ENCODE measurements at regions of chr5 and their contacts with region 1.

Region 1: GRCh38 chr5:39424736-39425637 is at the start of gene DAB2:
- DNase-seq: peak; percentile 72 to 77 (median 73)
- H3K4me3 ChIP-seq: peak within 1 kb of the TSS; percentile 49 to 79 (median 65)
- H3K4me3 Mint-ChIP-seq: peak within 1 kb of the TSS; percentile 92 to 98
- H3K27ac ChIP-seq: peak within 1 kb of the TSS; percentile 36 to 55
- H3K27ac Mint-ChIP-seq: peak within 1 kb of the TSS; percentile 59 to 93 (median 87)
- H3K4me1 ChIP-seq: peaks cover 21 to 27% of the 10 kb centered on the region in 2 donors
- H3K4me1 Mint-ChIP-seq: peaks cover 39% of the 10 kb centered on the region
- H3K27me3 ChIP-seq: no peaks in the 10 kb centered on the region
- H3K27me3 Mint-ChIP-seq: peaks cover 4 to 11% (median 7%) of the 10 kb centered on the region in 3 donors
- CTCF ChIP-seq: peak; percentile 55
- polyA plus RNA-seq, gene DAB2: 0.98 to 4.8 (median 3.0) TPM

Region 2: DNA sequence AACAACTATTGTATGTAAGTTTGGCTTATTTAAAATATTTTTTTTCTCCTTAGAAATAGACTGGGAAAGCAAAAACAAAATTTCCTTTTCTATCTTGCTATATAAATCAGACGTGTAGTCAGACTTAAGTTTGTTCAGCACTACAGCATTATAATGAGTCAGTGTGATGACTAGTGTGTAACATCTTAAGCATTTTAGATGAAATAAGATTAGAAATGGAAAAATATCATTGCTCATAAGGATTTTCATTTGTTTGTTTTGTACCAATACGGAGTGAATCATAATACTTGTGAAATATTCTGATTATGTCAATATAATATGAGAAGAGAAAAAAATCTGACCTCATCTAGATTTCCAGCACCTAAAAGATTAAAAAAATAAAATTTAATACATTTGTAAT is 286.1 kb before region 1 on chr5:
- intact Hi-C with region 1: no loop called
- DNase-seq: no peak
- H3K4me3 ChIP-seq: no peak overlapping the region
- H3K4me3 Mint-ChIP-seq: no peak overlapping the region
- H3K27ac ChIP-seq: no peak overlapping the region
- H3K27ac Mint-ChIP-seq: no peak overlapping the region
- H3K4me1 ChIP-seq: peaks cover 3 to 15% of the 10 kb centered on the region in 2 donors
- H3K4me1 Mint-ChIP-seq: peaks cover 1% of the 10 kb centered on the region
- H3K27me3 ChIP-seq: no peaks in the 10 kb centered on the region
- H3K27me3 Mint-ChIP-seq: no peaks in the 10 kb centered on the region
- CTCF ChIP-seq: no peak

Region 3: DNA sequence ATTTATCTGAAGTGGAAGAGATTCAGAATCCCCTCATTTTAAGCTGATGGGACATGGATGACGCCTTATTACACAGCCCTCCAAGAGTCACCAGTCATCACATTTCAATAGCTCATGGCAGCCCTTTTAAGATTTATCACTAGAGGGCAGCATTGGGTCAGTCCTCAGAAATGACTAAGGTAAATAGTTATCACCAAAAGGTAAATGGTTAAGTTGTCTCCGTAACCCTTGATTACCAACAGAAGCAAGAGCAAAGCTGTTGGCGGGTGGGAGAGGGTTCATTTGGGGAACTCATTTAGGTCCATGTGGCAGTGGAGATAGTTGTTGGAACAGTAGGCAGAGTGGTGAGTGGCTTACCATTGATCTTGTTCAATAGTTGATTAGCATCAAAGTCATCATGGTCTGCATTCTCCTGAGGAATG is 48.7 kb before region 1 on chr5:
- intact Hi-C with region 1: loop called in 1 of 2 experiments (anchors 5 kb)
- DNase-seq: peak; percentile 34 to 69 (median 55)
- H3K4me3 ChIP-seq: no peak overlapping the region
- H3K4me3 Mint-ChIP-seq: no peak overlapping the region
- H3K27ac ChIP-seq: no peak overlapping the region
- H3K27ac Mint-ChIP-seq: no peak overlapping the region
- H3K4me1 ChIP-seq: no peaks in the 10 kb centered on the region
- H3K4me1 Mint-ChIP-seq: no peaks in the 10 kb centered on the region
- H3K27me3 ChIP-seq: no peaks in the 10 kb centered on the region
- H3K27me3 Mint-ChIP-seq: peaks cover 0 to 2% (median 0%) of the 10 kb centered on the region in 3 donors
- CTCF ChIP-seq: peak; percentile 92